Mammary epithelial cell (primary cell): ENCODE measurements at regions of chr20 and their contacts with region 1.

Region 1: DNA sequence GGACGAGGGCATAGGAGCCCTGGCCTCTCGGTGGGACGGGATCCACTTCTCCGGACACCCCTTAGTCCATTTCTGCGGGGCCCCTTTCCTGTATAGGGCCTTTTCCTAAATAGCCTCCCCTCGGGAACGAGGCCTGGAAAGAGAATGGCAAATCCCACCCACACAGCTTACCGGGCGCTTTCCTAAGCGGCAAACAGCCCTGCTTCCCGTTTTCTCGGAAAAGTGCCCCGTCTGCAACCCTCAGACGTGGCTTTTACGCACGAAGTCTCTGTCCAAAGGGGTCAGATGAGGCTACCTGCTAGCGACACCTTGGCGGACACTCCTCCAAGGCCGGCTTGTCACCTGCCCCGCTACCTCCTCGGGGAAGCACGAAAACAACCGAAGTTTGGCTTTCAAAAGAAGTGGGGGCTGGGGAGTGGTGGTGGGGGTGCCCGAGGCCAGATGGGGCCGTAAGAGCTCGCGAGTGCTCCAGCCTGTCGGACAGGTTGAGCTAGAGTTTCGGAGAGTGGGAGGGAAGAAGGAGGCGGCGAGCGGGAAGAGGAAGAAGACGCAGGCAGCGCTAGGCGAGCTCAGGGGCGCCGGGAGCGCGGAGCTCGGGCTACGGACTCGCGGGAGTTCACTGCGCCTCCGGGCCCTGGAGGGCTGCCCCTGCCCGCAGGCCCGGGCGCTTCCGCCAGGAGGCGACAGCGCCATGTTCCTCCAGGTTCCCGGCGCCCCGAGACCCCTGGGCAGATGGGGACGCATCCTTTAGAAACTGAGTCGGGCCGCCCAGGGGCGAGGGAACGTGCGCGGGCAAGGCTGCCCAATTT is 768 bp downstream of the TFAP2C start:
- DNase-seq: peak; percentile 95
- H3K4me3 ChIP-seq: peak overlapping the region; percentile 58 to 95 (median 64)
- H3K27ac ChIP-seq: peak overlapping the region; percentile 81
- H3K4me1 ChIP-seq: peaks cover 32% of the 10 kb centered on the region
- H3K27me3 ChIP-seq: peaks cover 2% of the 10 kb centered on the region
- CTCF ChIP-seq: peak; percentile 61 to 89

Region 2: GRCh38 chr20:56554869-56555268 is 75.0 kb before region 1 on chr20:
- CTCF ChIA-PET with region 1: interaction called, 5 read pairs
- dilution Hi-C with region 1: no loop called
- in situ Hi-C with region 1: no loop called
- intact Hi-C with region 1: loop called (anchors 1 kb)
- DNase-seq: peak; percentile 95
- H3K4me3 ChIP-seq: no peak overlapping the region
- H3K27ac ChIP-seq: no peak overlapping the region
- H3K4me1 ChIP-seq: peaks cover 17% of the 10 kb centered on the region
- H3K27me3 ChIP-seq: no peaks in the 10 kb centered on the region
- CTCF ChIP-seq: peak; percentile 16 to 21

Region 3: GRCh38 chr20:56765162-56766073 is 135.5 kb after region 1 on chr20:
- CTCF ChIA-PET with region 1: no interaction called
- dilution Hi-C with region 1: no loop called
- in situ Hi-C with region 1: no loop called
- intact Hi-C with region 1: loop called (anchors 2 kb)
- DNase-seq: peak; percentile 84
- H3K4me3 ChIP-seq: no peak overlapping the region
- H3K27ac ChIP-seq: peak overlapping the region; percentile 60
- H3K4me1 ChIP-seq: peaks cover 38% of the 10 kb centered on the region
- H3K27me3 ChIP-seq: no peaks in the 10 kb centered on the region
- CTCF ChIP-seq: no peak

Region 4: GRCh38 chr20:56826705-56827631 is 197.1 kb after region 1 on chr20:
- CTCF ChIA-PET with region 1: no interaction called
- dilution Hi-C with region 1: no loop called
- in situ Hi-C with region 1: no loop called
- intact Hi-C with region 1: loop called (anchors 1 kb)
- DNase-seq: peak; percentile 95
- H3K4me3 ChIP-seq: peak overlapping the region in 2 of 3 experiments; percentile 27 to 38
- H3K27ac ChIP-seq: peak overlapping the region; percentile 87
- H3K4me1 ChIP-seq: peaks cover 23% of the 10 kb centered on the region
- H3K27me3 ChIP-seq: no peaks in the 10 kb centered on the region
- CTCF ChIP-seq: no peak

Region 5: GRCh38 chr20:56974499-56975236 is 344.8 kb after region 1 on chr20:
- CTCF ChIA-PET with region 1: interaction called, 5 read pairs
- dilution Hi-C with region 1: no loop called
- in situ Hi-C with region 1: loop called in 1 of 2 experiments (anchors 5 kb)
- intact Hi-C with region 1: loop called (anchors 1 kb)
- DNase-seq: peak; percentile 55
- H3K4me3 ChIP-seq: no peak overlapping the region
- H3K27ac ChIP-seq: no peak overlapping the region
- H3K4me1 ChIP-seq: no peaks in the 10 kb centered on the region
- H3K27me3 ChIP-seq: peaks cover 3% of the 10 kb centered on the region
- CTCF ChIP-seq: peak; percentile 86

Region 6: GRCh38 chr20:57080788-57081187 is 450.9 kb after region 1 on chr20:
- CTCF ChIA-PET with region 1: no interaction called
- dilution Hi-C with region 1: no loop called
- in situ Hi-C with region 1: no loop called
- intact Hi-C with region 1: loop called (anchors 1 kb)
- DNase-seq: peak; percentile 33
- H3K4me3 ChIP-seq: no peak overlapping the region
- H3K27ac ChIP-seq: no peak overlapping the region
- H3K4me1 ChIP-seq: no peaks in the 10 kb centered on the region
- H3K27me3 ChIP-seq: no peaks in the 10 kb centered on the region
- CTCF ChIP-seq: peak; percentile 14 to 46